Vagina (tissue), 2 donors: ENCODE measurements at regions of chr15 and their contacts with region 1.

Region 1: GRCh38 chr15:46354443-46354842 is 719.6 kb downstream of the SQOR start:
- DNase-seq: no peak
- H3K4me3 ChIP-seq: no peak overlapping the region
- H3K27ac ChIP-seq: no peak overlapping the region
- H3K4me1 ChIP-seq: no peaks in the 10 kb centered on the region
- H3K27me3 ChIP-seq: no peaks in the 10 kb centered on the region
- CTCF ChIP-seq: no peak
- POLR2A ChIP-seq: no peak

Region 2: GRCh38 chr15:46222826-46223225 is 131.6 kb before region 1 on chr15:
- intact Hi-C with region 1: no loop called
- DNase-seq: no peak
- H3K4me3 ChIP-seq: no peak overlapping the region
- H3K27ac ChIP-seq: no peak overlapping the region
- H3K4me1 ChIP-seq: no peaks in the 10 kb centered on the region
- H3K27me3 ChIP-seq: no peaks in the 10 kb centered on the region
- CTCF ChIP-seq: no peak
- POLR2A ChIP-seq: no peak

Region 3: GRCh38 chr15:46326173-46326572 is 28.3 kb before region 1 on chr15:
- intact Hi-C with region 1: loop called (anchors 1 kb)
- DNase-seq: no peak
- H3K4me3 ChIP-seq: no peak overlapping the region
- H3K27ac ChIP-seq: no peak overlapping the region
- H3K4me1 ChIP-seq: no peaks in the 10 kb centered on the region
- H3K27me3 ChIP-seq: no peaks in the 10 kb centered on the region
- CTCF ChIP-seq: no peak
- POLR2A ChIP-seq: no peak

Region 4: DNA sequence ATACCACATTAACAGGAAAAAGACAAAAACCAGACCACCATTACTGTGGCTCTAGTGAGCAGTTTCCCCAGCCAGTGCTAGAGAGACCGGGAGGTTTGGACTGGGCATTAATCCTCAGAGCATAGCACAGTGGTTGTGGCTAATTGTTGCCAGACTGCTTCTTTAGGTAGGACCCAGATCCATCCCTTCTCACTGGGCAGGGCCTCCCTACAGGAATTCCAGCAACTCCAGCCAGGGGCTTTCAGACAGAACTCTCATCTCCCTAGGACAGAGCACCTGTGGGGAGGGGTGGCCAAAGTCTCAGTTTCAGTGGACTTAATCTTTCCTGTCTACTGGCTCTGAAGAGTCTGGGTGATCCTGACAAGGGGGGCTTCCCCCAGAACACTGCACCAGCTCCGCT is 40.0 kb after region 1 on chr15:
- intact Hi-C with region 1: no loop called
- DNase-seq: no peak
- H3K4me3 ChIP-seq: no peak overlapping the region
- H3K27ac ChIP-seq: no peak overlapping the region
- H3K4me1 ChIP-seq: no peaks in the 10 kb centered on the region
- H3K27me3 ChIP-seq: no peaks in the 10 kb centered on the region
- CTCF ChIP-seq: no peak
- POLR2A ChIP-seq: no peak